Body of pancreas (tissue), 4 donors: ENCODE measurements at regions of chr9 and their contacts with region 1.

Region 1: DNA sequence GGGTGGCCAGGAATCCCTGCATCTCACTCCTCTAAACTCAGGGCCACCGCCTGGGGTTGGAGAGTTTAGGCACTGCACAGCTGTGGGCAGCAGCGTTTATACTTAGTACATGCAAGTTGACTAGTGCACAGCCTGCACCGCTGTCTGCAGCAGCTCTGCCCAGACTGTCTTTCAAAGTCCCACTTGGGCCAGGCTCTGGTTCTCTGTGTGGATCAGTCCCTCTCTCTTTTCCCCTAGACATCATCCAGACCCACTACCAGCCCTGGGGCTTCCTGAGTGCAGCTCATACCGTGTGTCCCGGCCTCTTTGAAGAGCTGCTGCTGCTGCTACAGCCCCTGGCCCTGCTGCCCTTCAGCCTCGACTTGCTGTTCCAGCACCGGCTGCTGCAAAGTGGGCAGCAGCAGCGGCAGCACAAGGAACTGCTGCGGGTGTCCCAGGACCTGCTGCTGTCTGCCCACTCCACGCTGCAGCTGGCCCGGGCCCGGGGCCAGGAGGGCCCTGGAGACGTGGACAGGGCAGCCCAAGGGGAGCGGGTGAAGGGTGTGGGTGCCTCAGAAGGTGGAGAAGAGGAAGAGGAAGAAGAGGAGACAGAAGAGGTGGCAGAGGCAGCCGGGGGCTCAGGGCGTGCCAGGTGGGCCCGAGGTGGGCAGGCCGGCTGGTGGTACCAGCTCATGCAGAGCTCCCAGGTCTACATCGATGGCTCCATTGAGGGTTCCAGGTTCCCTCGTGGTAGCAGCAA is 45.1 kb upstream of the TESK1 start:
- DNase-seq: no peak
- ATAC-seq: no peak
- H3K4me3 ChIP-seq: no peak overlapping the region
- H3K27ac ChIP-seq: no peak overlapping the region
- H3K4me1 ChIP-seq: peaks cover 9% of the 10 kb centered on the region
- H3K27me3 ChIP-seq: no peaks in the 10 kb centered on the region
- CTCF ChIP-seq: no peak
- POLR2A ChIP-seq: no peak

Region 2: GRCh38 chr9:35489313-35490154 is 70.4 kb before region 1 on chr9 and contains the start of gene RUSC2:
- intact Hi-C with region 1: loop called (anchors 5 kb)
- DNase-seq: peak; percentile 83 to 88 (median 85)
- ATAC-seq: peak; percentile 83
- H3K4me3 ChIP-seq: peak within 1 kb of the TSS; percentile 58 to 61
- H3K27ac ChIP-seq: peak within 1 kb of the TSS; percentile 83 to 95 (median 90)
- H3K4me1 ChIP-seq: peaks cover 28% of the 10 kb centered on the region
- H3K27me3 ChIP-seq: no peaks in the 10 kb centered on the region
- CTCF ChIP-seq: peak in 6 of 7 experiments; percentile 19 to 58 (median 40)
- POLR2A ChIP-seq: peak; percentile 78 to 85 (median 81)
- total RNA-seq, gene RUSC2: 16.9 to 27.4 TPM